ENCODE measurements at regions of chrX and their contacts with region 1.

Region 1: GRCh38 chrX:150643271-150643670 is 49.9 kb upstream of the MTMR1 start:
- DNase-seq: peak; percentile 5
- H3K4me3 ChIP-seq: no peak overlapping the region
- H3K27ac ChIP-seq: no peak overlapping the region
- H3K4me1 ChIP-seq: peaks cover 17% of the 10 kb centered on the region
- H3K27me3 ChIP-seq: no peaks in the 10 kb centered on the region
- CTCF ChIP-seq: no peak
- POLR2A ChIP-seq: no peak

Region 2: GRCh38 chrX:150599226-150599625 is 44.0 kb before region 1 on chrX:
- CTCF ChIA-PET with region 1: no interaction called
- POLR2A ChIA-PET with region 1: no interaction called
- dilution Hi-C with region 1: no loop called
- intact Hi-C with region 1: loop called (anchors 2 kb)
- DNase-seq: no peak
- H3K4me3 ChIP-seq: no peak overlapping the region
- H3K27ac ChIP-seq: no peak overlapping the region
- H3K4me1 ChIP-seq: no peaks in the 10 kb centered on the region
- H3K27me3 ChIP-seq: no peaks in the 10 kb centered on the region
- CTCF ChIP-seq: no peak
- POLR2A ChIP-seq: no peak